ENCODE measurements at regions of chr2 and their contacts with region 1.

Region 1: DNA sequence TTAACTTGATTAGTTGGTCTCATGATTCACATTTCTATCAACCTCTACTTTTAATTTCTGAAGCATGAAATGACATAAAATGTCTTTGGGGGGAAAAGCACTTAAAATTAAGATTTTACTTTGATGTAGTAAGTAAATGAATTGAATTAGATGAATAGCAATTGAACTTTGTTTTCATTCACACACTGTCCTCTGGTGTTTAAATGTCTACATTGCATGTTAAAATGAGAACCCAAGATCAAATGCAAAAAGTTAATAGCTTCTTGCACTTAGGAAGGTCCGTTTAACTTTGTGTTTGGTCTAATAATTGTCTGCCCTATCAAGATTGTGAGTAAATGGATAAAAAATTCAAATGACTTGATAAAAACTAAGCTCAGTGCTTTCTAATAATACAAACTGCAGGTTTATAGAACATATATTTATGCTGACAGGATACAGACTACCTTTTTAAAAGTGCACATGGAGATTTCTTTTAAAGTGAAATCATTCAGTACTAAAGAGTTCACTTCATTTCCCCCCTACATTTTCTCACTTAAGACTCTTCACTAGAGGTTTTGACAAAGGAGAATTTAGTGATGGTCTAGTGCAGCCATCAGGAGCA is 156.2 kb upstream of the NABP1 start:
- DNase-seq: no peak
- ATAC-seq: no peak
- H3K4me3 Mint-ChIP-seq: no peak overlapping the region
- H3K27ac Mint-ChIP-seq: no peak overlapping the region
- H3K4me1 Mint-ChIP-seq: no peaks in the 10 kb centered on the region
- H3K27me3 Mint-ChIP-seq: peaks cover 6% of the 10 kb centered on the region

Region 2: GRCh38 chr2:191171708-191172355 is 349.9 kb before region 1 on chr2:
- CTCF ChIA-PET with region 1: interaction called, 83 read pairs
- POLR2A ChIA-PET with region 1: no interaction called
- intact Hi-C with region 1: loop called in 1 of 2 experiments (anchors 1 kb)
- DNase-seq: peak; percentile 48
- ATAC-seq: peak; percentile 56
- H3K4me3 Mint-ChIP-seq: no peak overlapping the region
- H3K27ac Mint-ChIP-seq: peak overlapping the region; percentile 60
- H3K4me1 Mint-ChIP-seq: peaks cover 78% of the 10 kb centered on the region
- H3K27me3 Mint-ChIP-seq: no peaks in the 10 kb centered on the region

Region 3: GRCh38 chr2:191245046-191245868 is 276.5 kb before region 1 on chr2 and contains the start of gene MYO1B:
- CTCF ChIA-PET with region 1: interaction called, 6 read pairs
- POLR2A ChIA-PET with region 1: no interaction called
- intact Hi-C with region 1: loop called in 1 of 2 experiments (anchors 1 kb)
- DNase-seq: peak; percentile 81
- ATAC-seq: peak; percentile 84
- H3K4me3 Mint-ChIP-seq: peak within 1 kb of the TSS; percentile 79
- H3K27ac Mint-ChIP-seq: peak within 1 kb of the TSS; percentile 80
- H3K4me1 Mint-ChIP-seq: peaks cover 20% of the 10 kb centered on the region
- H3K27me3 Mint-ChIP-seq: peaks cover 20% of the 10 kb centered on the region
- total RNA-seq, gene MYO1B: 29.7 to 36.7 TPM

Region 4: DNA sequence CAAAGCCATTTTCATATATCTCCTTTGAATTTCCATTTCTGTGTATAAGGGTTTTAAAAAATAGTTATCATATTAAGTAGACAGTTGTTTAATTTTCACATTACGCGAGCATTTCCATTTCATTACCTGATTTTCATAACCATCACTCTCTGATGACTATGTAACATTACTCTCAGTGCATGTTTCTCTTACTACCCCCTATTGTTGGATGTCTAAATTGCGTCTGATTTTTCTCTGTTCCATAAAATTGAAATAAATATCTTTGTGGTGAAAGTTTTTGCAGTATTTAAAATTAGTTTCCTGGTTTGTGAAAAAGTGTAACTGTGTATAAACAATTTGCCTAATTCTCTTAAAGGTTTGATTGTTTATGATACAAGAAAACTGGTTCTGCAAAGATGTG is 152.7 kb before region 1 on chr2:
- CTCF ChIA-PET with region 1: no interaction called
- POLR2A ChIA-PET with region 1: no interaction called
- intact Hi-C with region 1: loop called in 1 of 2 experiments (anchors 10 kb)
- DNase-seq: no peak
- ATAC-seq: no peak
- H3K4me3 Mint-ChIP-seq: no peak overlapping the region
- H3K27ac Mint-ChIP-seq: no peak overlapping the region
- H3K4me1 Mint-ChIP-seq: no peaks in the 10 kb centered on the region
- H3K27me3 Mint-ChIP-seq: no peaks in the 10 kb centered on the region

Region 5: DNA sequence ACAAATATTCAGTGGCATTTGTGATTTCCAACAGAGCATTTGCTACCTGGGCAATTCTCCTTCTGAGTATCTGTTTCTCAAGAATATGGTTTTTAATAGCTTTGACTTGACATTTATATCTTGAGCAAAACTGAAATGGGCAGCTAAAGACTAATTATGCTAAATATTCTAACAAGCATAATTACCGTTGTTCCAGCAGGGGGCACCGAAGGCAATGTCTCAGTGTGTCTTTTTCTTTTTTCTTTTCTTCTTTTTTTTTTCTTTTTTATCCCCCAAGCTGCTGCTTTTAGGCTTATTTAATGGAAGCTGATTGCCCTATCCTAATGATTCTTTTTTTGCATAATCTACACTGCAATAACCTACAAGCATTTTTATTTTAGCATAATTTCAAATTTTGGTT is 17.4 kb after region 1 on chr2:
- CTCF ChIA-PET with region 1: interaction called, 12 read pairs
- POLR2A ChIA-PET with region 1: no interaction called
- intact Hi-C with region 1: no loop called
- DNase-seq: peak; percentile 64
- ATAC-seq: no peak
- H3K4me3 Mint-ChIP-seq: no peak overlapping the region
- H3K27ac Mint-ChIP-seq: no peak overlapping the region
- H3K4me1 Mint-ChIP-seq: no peaks in the 10 kb centered on the region
- H3K27me3 Mint-ChIP-seq: no peaks in the 10 kb centered on the region